Heart right ventricle (tissue), 16 donors: ENCODE measurements at regions of chr22 and their contacts with region 1.

Region 1: GRCh38 chr22:31970490-31971444 is 26.4 kb downstream of the YWHAH start:
- DNase-seq: peak; percentile 74 to 86
- ATAC-seq: peak; percentile 94 to 98 (median 96)
- H3K4me3 ChIP-seq: peak overlapping the region in 9 of 10 donors; percentile 26 to 57 (median 48)
- H3K27ac ChIP-seq: peak overlapping the region in 3 of 10 donors; percentile 16 to 43 (median 17)
- H3K4me1 ChIP-seq: peaks cover 3 to 21% (median 11%) of the 10 kb centered on the region in 9 donors
- H3K27me3 ChIP-seq: no peaks in the 10 kb centered on the region
- CTCF ChIP-seq: peak; percentile 92 to 96 (median 94)

Region 2: DNA sequence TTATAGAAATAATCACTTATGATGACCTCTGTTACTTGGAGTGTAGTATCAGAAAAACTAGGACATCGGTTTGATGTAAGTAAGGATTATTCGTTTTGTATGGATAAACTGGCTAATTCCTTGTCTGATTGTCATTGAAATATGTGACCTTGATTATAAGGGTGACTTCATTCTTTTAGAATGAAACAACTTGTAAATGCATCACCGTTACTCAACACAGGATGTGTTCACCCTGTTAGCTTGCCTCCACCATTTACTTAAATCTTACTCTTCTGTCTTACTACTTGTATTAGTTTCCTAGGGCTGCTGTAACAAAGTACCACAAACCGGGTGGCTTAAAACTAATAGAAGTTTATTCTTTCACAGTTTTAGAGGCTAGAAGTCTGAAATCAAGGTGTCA is 466.5 kb before region 1 on chr22:
- intact Hi-C with region 1: no loop called
- DNase-seq: no peak
- ATAC-seq: no peak
- H3K4me3 ChIP-seq: no peak overlapping the region
- H3K27ac ChIP-seq: no peak overlapping the region
- H3K4me1 ChIP-seq: no peaks in the 10 kb centered on the region
- H3K27me3 ChIP-seq: no peaks in the 10 kb centered on the region
- CTCF ChIP-seq: no peak

Region 3: DNA sequence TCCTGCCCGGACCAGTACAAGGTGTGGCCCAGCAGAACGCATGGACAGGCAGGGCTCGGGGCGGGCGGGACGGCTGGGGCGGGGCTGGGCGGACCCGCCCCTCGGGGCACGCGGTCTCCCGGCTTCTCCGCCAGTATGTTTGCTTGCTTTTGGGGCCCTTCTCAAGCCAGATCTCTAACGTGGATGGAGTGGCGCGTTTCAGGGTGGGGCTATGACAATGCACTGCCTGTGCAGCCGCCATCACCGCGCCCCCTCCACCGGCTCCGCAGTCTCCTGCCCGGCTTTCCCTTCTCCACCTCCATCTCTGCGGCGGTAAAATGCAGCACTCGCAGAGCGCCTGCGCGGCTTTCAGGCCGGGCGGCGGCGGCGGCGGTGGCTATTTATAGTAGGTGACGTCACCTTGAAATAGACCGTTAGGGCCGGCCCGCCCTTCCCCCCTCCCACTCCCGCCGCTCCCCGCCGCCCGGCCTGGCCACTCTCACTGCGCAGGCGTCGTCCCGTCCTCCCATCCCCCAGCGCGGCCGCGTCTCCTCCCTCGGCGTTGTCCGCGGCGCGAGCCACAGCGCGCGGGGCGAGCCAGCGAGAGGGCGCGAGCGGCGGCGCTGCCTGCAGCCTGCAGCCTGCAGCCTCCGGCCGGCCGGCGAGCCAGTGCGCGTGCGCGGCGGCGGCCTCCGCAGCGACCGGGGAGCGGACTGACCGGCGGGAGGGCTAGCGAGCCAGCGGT is 26.6 kb before region 1 on chr22 and contains the start of gene YWHAH:
- intact Hi-C with region 1: loop called in 1 of 10 experiments (anchors 2 kb)
- DNase-seq: peak; percentile 96 to 98
- ATAC-seq: peak; percentile 93 to 96 (median 94)
- H3K4me3 ChIP-seq: peak within 1 kb of the TSS; percentile 76 to 96 (median 86)
- H3K27ac ChIP-seq: peak within 1 kb of the TSS; percentile 95 to 99 (median 99)
- H3K4me1 ChIP-seq: peaks cover 0 to 43% (median 38%) of the 10 kb centered on the region in 9 donors
- H3K27me3 ChIP-seq: no peaks in the 10 kb centered on the region
- CTCF ChIP-seq: no peak
- total RNA-seq, gene YWHAH: 57.7 to 115 (median 75.8) TPM

Region 4: GRCh38 chr22:32005453-32005852 is 34.7 kb after region 1 on chr22:
- intact Hi-C with region 1: no loop called
- DNase-seq: no peak
- ATAC-seq: no peak
- H3K4me3 ChIP-seq: no peak overlapping the region
- H3K27ac ChIP-seq: no peak overlapping the region
- H3K4me1 ChIP-seq: no peaks in the 10 kb centered on the region
- H3K27me3 ChIP-seq: peaks cover 0 to 4% (median 0%) of the 10 kb centered on the region in 7 donors
- CTCF ChIP-seq: no peak

Region 5: GRCh38 chr22:32123657-32124056 is 152.9 kb after region 1 on chr22:
- intact Hi-C with region 1: no loop called
- DNase-seq: no peak
- ATAC-seq: peak in 1 of 8 donors; percentile 16
- H3K4me3 ChIP-seq: no peak overlapping the region
- H3K27ac ChIP-seq: no peak overlapping the region
- H3K4me1 ChIP-seq: no peaks in the 10 kb centered on the region
- H3K27me3 ChIP-seq: no peaks in the 10 kb centered on the region
- CTCF ChIP-seq: no peak

Region 6: DNA sequence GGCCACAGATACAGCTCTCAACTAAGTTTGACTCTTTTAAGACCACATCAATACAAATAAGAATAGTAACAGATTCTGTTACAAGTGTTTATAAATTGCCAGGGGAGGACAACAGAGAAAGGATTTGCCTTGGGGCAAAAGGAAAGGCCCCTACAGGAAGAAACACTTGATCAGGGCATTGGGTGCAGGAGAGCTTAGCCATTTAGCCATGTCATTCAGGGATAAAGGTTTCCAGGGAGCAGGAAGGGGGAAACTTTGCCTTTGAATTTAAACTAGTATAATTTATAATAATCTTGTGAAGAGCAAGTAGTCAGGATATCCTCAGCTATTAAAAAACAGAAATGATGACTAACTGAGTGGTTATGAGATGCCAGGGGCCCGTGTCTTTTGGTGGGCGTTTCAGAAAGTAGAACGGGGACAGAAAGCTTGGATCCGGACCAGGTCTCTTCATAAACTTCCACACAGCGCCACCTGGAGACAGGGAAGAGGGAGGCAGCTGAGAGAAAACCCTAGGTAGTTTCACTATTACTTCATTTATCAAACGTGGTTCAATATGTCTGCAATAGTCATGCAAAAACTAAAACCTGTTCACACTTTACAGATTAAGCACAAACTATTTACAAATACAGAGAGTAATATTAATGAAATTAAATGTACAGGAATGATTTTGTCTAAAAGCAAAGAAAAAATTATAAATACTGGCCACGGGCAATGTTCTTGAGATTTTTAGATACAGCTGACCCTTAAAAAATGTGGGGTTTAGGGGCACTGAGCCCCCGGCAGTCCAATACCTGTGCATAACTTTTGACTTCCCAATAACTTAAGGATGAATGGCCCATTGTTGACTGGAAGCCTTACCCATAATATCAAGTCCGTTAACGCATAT is 295.4 kb after region 1 on chr22:
- intact Hi-C with region 1: loop called in 7 of 10 experiments (anchors 5 to 10 kb)
- DNase-seq: peak; percentile 25 to 73
- ATAC-seq: peak in 6 of 8 donors; percentile 43 to 78 (median 54)
- H3K4me3 ChIP-seq: peak overlapping the region in 3 of 10 donors; percentile 2 to 27 (median 21)
- H3K27ac ChIP-seq: no peak overlapping the region
- H3K4me1 ChIP-seq: peaks cover 0 to 9% (median 0%) of the 10 kb centered on the region in 9 donors
- H3K27me3 ChIP-seq: peaks cover 0 to 3% (median 0%) of the 10 kb centered on the region in 7 donors
- CTCF ChIP-seq: peak; percentile 54 to 90 (median 86)

Region 7: DNA sequence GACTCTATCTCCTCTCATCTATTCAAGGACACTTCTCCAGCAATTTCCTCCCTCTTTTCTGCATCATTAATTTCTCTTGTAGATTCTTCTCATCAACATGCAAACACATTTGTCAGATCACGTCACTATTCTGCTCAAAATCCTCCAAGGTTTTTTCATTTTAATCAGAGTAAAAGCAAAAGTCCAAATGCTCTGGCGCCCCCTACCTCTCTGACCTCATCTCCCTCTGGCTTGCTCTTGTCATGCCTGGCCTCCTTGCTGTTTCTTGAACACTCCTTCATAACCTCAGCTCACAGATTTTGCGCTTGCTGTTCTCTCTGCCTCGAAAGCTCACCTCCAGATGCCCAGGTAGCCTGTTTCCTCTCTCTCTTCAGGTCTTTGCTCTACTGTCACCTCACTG is 418.9 kb after region 1 on chr22:
- intact Hi-C with region 1: loop called in 2 of 10 experiments (anchors 10 kb)
- DNase-seq: no peak
- ATAC-seq: no peak
- H3K4me3 ChIP-seq: no peak overlapping the region
- H3K27ac ChIP-seq: no peak overlapping the region
- H3K4me1 ChIP-seq: no peaks in the 10 kb centered on the region
- H3K27me3 ChIP-seq: no peaks in the 10 kb centered on the region
- CTCF ChIP-seq: peak in 7 of 9 donors; percentile 20 to 53 (median 44)